Activated T-helper 2 cell treated with anti-CD3 and anti-CD28 coated beads, Interferon-gamma antibody, Interleukin-2, Interleukin-4, amounts not matched to agents 10 μg/mL and 5 μg/mL and 100 μg/mL, durations not matched to agents 14 hours and 24 hours and 36 hours (primary cell): ENCODE measurements at regions of chrX and their contacts with region 1.

Region 1: DNA sequence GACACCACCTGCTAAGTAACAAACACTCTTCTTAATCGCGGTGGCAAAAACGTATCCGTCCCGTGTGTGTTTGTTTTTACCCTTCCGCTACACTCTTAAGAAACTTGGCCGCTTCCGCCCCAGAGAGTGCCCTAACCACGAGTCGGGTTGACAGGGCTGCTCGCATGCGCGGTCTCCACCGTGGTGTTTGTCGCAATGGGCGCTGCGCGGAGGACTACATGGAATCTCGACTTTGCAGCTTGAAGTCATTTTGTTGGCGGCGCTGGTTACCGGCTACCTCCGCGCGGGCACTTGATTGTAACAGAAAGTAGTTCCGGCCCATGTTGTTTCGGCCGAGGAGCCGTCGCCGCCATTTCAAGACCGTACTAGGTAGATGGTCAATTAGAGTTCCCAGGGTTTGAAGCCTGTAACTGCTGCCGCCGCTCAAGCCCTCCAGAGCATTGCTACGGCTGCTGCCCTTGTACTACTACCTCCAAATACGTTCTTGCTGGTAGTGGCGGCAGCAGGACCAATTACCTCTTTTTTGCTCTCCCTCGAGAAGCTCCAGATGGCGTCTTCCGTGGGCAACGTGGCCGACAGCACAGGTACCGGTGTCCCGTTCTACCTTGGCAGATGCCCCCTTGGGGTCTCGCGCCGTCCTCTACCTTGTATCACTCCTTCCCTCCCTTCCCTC is at the start of gene OGT:
- DNase-seq: peak; percentile 92
- H3K4me3 Mint-ChIP-seq: peak within 1 kb of the TSS; percentile 99
- H3K27ac Mint-ChIP-seq: peak within 1 kb of the TSS; percentile 99
- H3K4me1 Mint-ChIP-seq: peaks cover 22% of the 10 kb centered on the region
- H3K27me3 Mint-ChIP-seq: no peaks in the 10 kb centered on the region
- total RNA-seq, gene OGT: 224 and 231 TPM in 2 replicates

Region 2: DNA sequence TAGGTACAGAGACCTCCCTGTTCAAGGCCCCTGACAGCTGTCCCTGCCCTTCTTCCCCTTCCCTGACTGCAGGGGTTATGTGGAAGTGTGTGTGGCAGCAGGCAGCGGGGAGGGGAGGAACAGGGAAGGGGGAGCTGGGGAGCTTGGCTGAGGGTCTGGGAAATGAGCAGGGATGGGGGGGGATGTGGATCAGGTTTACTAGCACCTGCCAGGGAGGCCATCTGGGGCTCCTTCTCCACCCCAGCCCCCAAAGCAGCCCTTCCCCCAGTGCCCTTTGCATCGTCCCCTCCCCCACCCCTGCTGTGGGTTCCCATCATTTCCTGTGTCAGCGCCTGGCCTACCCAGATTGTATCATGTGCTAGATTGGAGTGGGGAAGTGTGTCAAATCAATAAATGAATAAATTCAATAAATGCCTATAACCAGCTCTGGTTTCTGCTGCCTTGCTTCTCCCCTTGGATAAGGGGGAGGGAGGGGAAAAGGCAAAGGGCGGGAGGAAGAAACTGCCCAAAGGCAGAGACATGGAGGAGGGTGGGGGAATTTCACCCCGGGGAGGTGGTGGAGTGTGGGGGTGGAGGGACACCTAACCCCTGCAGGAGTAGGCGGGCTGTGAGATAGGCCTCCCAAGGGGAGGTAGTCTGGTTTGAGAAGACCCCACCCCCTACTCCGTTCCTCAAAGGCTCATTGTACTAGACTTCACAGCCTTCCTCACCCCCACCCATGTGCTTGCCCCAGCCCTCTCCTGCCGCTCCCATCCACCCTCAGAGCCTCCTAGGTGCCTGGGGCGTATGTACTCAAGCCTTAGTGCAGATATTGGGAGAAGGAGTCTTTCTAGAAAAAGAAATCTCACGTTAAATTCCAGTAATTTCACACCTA is 429.5 kb before region 1 on chrX:
- intact Hi-C with region 1: loop called (anchors 5 kb)
- DNase-seq: no peak
- H3K4me3 Mint-ChIP-seq: peak overlapping the region; percentile 82
- H3K27ac Mint-ChIP-seq: peak overlapping the region; percentile 92
- H3K4me1 Mint-ChIP-seq: peaks cover 59% of the 10 kb centered on the region
- H3K27me3 Mint-ChIP-seq: no peaks in the 10 kb centered on the region

Region 3: GRCh38 chrX:71283403-71284143 is 249.3 kb before region 1 on chrX and contains the start of gene NONO:
- intact Hi-C with region 1: loop called (anchors 5 kb)
- DNase-seq: peak; percentile 84
- H3K4me3 Mint-ChIP-seq: peak within 1 kb of the TSS; percentile 88
- H3K27ac Mint-ChIP-seq: peak within 1 kb of the TSS; percentile 100
- H3K4me1 Mint-ChIP-seq: peaks cover 12% of the 10 kb centered on the region
- H3K27me3 Mint-ChIP-seq: peaks cover 3% of the 10 kb centered on the region
- total RNA-seq, gene NONO: 585 and 612 TPM in 2 replicates

Region 4: DNA sequence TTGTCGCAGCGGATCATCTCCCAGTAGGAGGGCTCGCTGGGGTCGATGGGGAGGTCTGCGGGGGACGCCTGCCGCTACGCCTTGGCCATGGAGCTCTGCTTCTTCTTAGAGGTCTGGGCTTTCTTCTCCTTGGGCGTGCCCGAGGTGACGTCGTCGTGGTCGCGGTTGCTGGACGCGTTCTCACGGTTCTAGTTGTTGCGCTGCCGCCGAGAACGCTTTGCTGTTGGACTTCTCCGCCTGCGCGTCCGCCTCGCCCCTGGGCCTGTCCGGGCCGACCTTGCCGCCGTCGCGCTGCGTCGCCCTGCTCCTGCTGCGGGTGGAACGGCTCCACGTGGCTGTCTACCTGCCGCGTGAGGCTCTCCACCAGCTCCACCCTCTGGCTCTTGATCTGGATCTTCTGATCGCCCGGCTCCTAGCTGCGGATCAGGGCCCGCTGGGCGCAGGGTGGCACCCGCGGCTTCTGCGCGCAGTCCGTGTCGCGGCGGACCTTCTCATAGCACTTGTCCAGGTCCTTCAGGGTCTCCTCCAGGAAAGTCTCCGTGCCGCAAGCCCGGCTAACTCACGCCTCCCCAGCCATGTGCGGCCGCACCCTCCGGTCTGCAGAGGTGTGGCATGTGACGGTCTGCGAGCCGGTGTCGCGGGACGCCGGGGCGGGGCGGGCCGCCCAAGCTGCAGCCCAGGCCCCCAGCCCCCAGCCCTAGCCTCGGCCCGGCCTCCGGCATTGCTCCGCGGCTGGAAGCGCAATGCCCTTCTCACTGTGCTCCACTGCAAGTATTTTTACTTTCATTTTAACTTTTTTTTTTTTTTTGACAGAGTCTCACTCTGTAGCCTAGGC is 40.4 kb before region 1 on chrX:
- intact Hi-C with region 1: loop called (anchors 2 kb)
- DNase-seq: peak; percentile 35
- H3K4me3 Mint-ChIP-seq: peak overlapping the region; percentile 78
- H3K27ac Mint-ChIP-seq: peak overlapping the region; percentile 50
- H3K4me1 Mint-ChIP-seq: peaks cover 12% of the 10 kb centered on the region
- H3K27me3 Mint-ChIP-seq: no peaks in the 10 kb centered on the region

Region 5: GRCh38 chrX:71550578-71550977 is 17.7 kb after region 1 on chrX:
- intact Hi-C with region 1: loop called (anchors 2 kb)
- DNase-seq: no peak
- H3K4me3 Mint-ChIP-seq: no peak overlapping the region
- H3K27ac Mint-ChIP-seq: peak overlapping the region; percentile 68
- H3K4me1 Mint-ChIP-seq: peaks cover 20% of the 10 kb centered on the region
- H3K27me3 Mint-ChIP-seq: no peaks in the 10 kb centered on the region

Region 6: GRCh38 chrX:71895607-71896006 is 362.7 kb after region 1 on chrX:
- intact Hi-C with region 1: no loop called
- DNase-seq: no peak
- H3K4me3 Mint-ChIP-seq: no peak overlapping the region
- H3K27ac Mint-ChIP-seq: no peak overlapping the region
- H3K4me1 Mint-ChIP-seq: no peaks in the 10 kb centered on the region
- H3K27me3 Mint-ChIP-seq: peaks cover 3% of the 10 kb centered on the region